Posterior vena cava (tissue), 2 donors: ENCODE measurements at regions of chrX and their contacts with region 1.

Region 1: DNA sequence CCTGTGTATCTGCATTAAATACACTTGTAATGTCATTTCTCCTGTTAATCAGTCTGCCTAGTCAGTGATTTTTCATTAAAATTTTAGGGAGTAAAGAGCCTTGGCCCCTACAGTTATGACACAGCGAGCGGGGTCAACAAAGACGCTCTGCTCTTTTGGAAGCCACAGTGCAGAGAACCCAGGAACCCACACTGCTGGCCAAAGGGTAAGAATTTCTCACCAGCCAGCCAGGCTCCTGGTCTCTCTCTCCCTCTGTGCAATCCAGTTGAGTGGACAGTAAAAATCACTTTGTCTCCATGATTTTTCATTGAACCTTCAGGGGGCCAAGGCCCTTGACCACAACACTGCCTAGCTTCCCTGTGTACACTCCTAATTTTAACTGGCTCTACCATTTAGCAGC is 52.8 kb downstream of the NLGN4X start:
- DNase-seq: no peak

Region 2: GRCh38 chrX:4588893-4589292 is 1587.0 kb before region 1 on chrX:
- intact Hi-C with region 1: loop called in 1 of 2 experiments (anchors 5 kb)
- DNase-seq: no peak

Region 3: DNA sequence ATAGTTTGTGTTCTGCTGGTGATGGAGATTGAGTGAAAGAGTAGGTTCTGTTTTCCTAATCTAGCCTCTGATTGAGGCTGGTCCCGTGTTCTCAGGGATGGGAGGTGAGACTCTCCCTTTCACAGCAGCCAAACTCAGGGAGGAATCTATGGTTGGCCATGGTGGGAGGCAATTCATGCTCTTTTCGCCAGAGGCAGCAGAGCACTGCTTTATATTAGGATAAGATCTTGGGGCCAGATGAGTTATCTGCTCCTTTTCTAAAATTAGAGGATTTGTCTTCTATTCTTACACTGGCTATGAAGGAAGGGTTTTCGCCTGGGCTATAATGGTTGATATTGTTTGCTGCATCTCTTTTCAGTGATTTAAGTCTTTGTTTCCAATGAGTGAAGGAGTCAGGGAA is 116.7 kb after region 1 on chrX:
- intact Hi-C with region 1: no loop called
- DNase-seq: no peak